ENCODE measurements at regions of chr18 and their contacts with region 1.

Region 1: GRCh38 chr18:9102508-9103375 is at the start of gene NDUFV2:
- DNase-seq: peak; percentile 95 to 96
- ATAC-seq: peak; percentile 89 to 93
- H3K4me3 ChIP-seq: peak within 1 kb of the TSS; percentile 73 to 89 (median 82)
- H3K27ac ChIP-seq: peak within 1 kb of the TSS; percentile 93 to 98 (median 96)
- H3K4me1 ChIP-seq: peaks cover 42 to 47% of the 10 kb centered on the region in 2 donors
- H3K27me3 ChIP-seq: no peaks in the 10 kb centered on the region
- CTCF ChIP-seq: no peak
- POLR2A ChIP-seq: peak; percentile 92
- total RNA-seq, gene NDUFV2: 251 to 386 (median 277) TPM

Region 2: DNA sequence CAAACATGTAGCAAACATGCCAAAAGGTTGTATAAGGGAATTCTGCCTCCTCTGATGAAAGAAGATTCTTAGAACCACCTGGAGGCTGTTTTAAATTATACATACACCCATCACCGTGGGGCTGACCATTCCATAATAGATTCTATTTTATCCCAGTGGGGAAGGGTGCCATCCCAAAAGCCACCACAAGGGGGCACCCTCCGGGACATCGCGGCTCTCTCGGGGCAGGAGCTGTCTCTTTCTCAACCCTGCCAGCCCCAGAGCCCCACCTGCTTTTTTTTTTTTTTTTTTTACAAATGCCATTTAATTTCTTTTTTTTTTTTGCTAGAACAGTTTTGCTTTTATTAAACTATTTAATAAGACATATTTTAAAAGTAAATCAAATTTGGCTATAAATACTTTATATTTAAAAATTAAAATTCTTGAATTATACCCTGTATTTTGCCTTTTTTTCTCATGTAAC is 406.0 kb before region 1 on chr18:
- in situ Hi-C with region 1: no loop called
- intact Hi-C with region 1: no loop called
- DNase-seq: peak; percentile 43 to 73
- ATAC-seq: peak; percentile 90 to 98
- H3K4me3 ChIP-seq: no peak overlapping the region
- H3K27ac ChIP-seq: no peak overlapping the region
- H3K4me1 ChIP-seq: no peaks in the 10 kb centered on the region
- H3K27me3 ChIP-seq: no peaks in the 10 kb centered on the region
- CTCF ChIP-seq: peak; percentile 66 to 94 (median 87)
- POLR2A ChIP-seq: no peak

Region 3: DNA sequence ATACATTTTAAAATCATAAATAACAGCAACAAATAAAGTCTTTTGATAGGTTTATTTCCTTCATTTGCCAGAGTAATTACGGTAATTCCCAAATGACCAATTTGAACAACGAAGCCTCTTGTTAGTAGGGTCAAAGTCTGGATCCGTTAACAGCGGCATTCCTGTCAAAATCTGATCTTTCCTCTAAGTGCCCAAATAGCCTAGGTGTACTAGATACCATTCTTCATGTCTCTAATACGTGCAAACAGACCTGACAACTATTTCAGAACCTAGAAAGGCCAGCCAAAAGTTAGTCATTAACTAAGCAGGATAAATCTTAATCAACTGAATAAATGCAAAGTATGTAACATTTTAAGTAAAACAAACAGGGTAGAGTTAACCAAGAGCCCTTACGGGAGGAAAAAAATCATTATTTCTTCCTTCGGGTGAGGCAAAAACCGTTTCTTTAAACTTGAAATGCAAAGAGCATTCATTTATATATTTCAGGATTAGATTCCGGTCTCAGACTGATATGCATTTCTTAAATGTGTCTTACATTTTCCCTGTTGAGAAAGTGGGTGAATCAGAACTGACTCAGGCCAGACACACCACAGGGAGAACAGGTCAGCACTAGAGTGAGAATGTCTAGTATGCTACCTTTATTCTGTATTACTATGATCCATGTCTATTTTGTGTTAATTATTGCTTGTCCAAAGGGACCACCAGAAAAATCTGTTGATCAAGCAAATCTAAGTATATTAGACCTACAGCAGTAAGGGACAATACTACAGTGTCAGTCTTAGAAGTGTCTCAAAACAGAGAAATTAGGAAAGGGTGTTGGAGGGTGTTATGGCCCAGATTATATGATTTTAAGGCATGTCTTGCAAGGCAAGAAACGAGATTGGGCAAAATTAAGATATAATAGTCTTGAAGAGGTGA is 141.7 kb before region 1 on chr18:
- in situ Hi-C with region 1: no loop called
- intact Hi-C with region 1: no loop called
- DNase-seq: no peak
- ATAC-seq: no peak
- H3K4me3 ChIP-seq: no peak overlapping the region
- H3K27ac ChIP-seq: no peak overlapping the region
- H3K4me1 ChIP-seq: no peaks in the 10 kb centered on the region
- H3K27me3 ChIP-seq: no peaks in the 10 kb centered on the region
- CTCF ChIP-seq: no peak
- POLR2A ChIP-seq: no peak

Region 4: DNA sequence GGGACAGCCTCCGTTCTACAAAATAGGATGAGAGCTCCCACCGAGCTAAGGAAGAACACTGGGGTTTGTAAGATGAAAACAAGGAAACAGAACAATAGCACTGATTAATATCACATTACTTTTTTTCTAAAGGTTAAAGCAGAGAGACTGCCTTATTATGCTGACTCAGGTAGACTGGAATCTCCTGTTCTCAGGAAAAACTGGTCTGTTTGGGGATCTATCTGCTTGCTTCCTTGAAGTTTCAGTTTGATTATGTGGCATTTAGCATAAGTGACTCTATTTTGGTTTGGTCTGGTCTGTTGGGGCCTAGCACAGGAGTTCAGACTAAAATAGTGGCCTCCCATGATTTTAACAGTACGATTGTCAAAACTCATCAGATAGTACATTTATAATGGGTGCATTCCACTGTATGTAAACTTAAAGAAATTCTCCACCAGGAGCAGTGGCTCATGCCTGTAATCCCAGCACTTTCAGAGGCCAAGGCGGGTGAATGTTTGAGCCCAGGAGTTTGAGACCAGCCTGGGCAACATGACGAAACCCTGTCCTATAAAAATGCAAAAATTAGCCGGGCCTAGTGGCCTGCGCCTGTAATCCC is 64.4 kb before region 1 on chr18:
- in situ Hi-C with region 1: no loop called
- intact Hi-C with region 1: no loop called
- DNase-seq: no peak
- ATAC-seq: no peak
- H3K4me3 ChIP-seq: no peak overlapping the region
- H3K27ac ChIP-seq: no peak overlapping the region
- H3K4me1 ChIP-seq: no peaks in the 10 kb centered on the region
- H3K27me3 ChIP-seq: no peaks in the 10 kb centered on the region
- CTCF ChIP-seq: no peak
- POLR2A ChIP-seq: no peak

Region 5: GRCh38 chr18:9066817-9067306 is 35.9 kb before region 1 on chr18:
- in situ Hi-C with region 1: no loop called
- intact Hi-C with region 1: loop called (anchors 2 kb)
- DNase-seq: no peak
- ATAC-seq: no peak
- H3K4me3 ChIP-seq: no peak overlapping the region
- H3K27ac ChIP-seq: no peak overlapping the region
- H3K4me1 ChIP-seq: peaks cover 0 to 7% of the 10 kb centered on the region in 2 donors
- H3K27me3 ChIP-seq: no peaks in the 10 kb centered on the region
- CTCF ChIP-seq: no peak
- POLR2A ChIP-seq: no peak

Region 6: DNA sequence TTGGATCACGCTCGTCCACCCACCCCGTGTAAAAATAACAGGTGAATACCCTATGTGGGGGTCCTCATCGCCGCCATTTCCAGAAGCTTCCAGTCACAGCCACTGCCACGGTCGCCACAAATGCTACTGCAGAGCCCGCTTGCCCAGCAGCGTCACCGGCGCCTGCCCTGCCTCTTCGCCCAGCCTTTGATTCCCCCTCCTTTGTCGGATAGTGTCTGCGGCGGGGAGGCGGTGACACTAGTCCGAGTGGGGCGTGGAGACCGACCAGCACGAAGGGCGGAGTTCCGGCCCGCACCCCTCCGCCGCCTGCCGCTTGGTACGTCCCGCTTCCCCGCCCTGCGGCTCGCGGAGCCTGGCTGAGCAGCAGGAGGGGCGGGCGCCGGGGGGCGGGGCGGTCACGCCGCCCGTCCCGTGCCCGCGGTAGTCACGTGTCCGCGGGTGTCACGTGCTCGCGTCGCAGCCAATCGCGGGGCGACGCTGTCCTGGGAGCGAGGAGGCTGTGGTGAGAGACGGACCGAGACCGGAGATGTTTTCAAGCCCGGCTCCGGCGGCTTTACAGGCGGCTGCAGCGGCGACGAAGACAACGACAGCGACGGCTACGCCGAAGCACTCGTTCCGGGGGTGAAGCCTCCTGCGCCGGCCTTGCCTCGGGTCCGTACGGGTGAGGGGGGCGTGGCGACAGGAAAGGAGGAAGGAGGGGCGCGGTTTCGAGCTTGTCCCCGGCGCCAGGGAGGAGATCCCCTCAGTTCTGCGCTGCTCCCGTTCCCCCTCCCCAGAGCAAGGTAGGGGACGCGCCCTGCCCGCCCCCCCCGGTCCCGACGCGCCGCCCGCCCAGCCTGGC is 33.8 kb after region 1 on chr18 and contains the start of gene ANKRD12:
- in situ Hi-C with region 1: loop called in 1 of 4 experiments (anchors 5 kb)
- intact Hi-C with region 1: loop called (anchors 1 kb)
- DNase-seq: peak; percentile 96 to 97
- ATAC-seq: peak; percentile 72 to 75
- H3K4me3 ChIP-seq: peak within 1 kb of the TSS; percentile 83 to 89 (median 86)
- H3K27ac ChIP-seq: peak within 1 kb of the TSS; percentile 97 to 98 (median 98)
- H3K4me1 ChIP-seq: peaks cover 58 to 64% of the 10 kb centered on the region in 2 donors
- H3K27me3 ChIP-seq: no peaks in the 10 kb centered on the region
- CTCF ChIP-seq: peak in 1 of 5 experiments; percentile 14
- POLR2A ChIP-seq: peak; percentile 93 to 94
- total RNA-seq, gene ANKRD12: 26.9 to 40.1 (median 36.7) TPM

Region 7: DNA sequence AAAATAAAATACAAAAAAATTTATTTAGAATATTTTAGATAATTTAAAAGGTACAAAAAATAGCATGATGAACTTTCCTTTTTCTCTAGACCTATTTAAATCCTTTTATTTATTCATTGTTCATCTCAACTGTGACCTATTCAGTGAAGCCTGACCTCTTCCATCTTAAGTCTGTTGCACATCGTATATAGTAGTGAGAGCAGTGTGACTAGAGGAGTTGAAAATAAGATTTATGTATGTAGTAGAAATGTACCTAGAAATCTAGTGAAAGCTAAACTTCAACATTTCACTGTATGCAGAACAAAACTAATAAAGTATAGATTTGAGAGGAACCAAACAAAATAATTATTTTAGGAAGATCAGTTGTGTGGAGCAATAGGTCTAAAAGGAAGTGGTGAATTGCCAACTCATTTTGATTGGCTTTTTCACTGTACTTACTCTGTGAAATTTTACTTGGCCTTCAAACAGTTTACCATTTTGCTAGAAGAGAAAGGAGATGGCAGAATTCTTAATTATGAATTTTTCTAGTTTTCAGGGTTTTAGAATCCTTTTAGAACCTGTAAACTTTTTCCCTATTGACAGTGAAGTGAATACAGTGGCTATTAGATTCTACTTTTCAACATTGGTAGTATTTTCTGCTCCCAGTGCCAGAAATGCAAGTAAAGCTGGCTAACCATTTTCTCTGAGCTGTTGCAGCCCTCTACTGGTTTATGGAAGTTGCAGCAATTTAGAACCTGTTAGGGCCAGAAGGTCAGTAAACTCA is 44.9 kb after region 1 on chr18:
- in situ Hi-C with region 1: no loop called
- intact Hi-C with region 1: loop called (anchors 1 kb)
- DNase-seq: peak; percentile 26 to 39
- ATAC-seq: peak; percentile 90 to 95
- H3K4me3 ChIP-seq: no peak overlapping the region
- H3K27ac ChIP-seq: peak overlapping the region; percentile 24 to 65 (median 58)
- H3K4me1 ChIP-seq: peaks cover 76 to 78% of the 10 kb centered on the region in 2 donors
- H3K27me3 ChIP-seq: no peaks in the 10 kb centered on the region
- CTCF ChIP-seq: peak; percentile 68 to 87 (median 81)
- POLR2A ChIP-seq: no peak

Region 8: GRCh38 chr18:9290156-9290555 is 187.4 kb after region 1 on chr18:
- in situ Hi-C with region 1: no loop called
- intact Hi-C with region 1: no loop called
- DNase-seq: no peak
- ATAC-seq: no peak
- H3K4me3 ChIP-seq: no peak overlapping the region
- H3K27ac ChIP-seq: no peak overlapping the region
- H3K4me1 ChIP-seq: no peaks in the 10 kb centered on the region
- H3K27me3 ChIP-seq: no peaks in the 10 kb centered on the region
- CTCF ChIP-seq: no peak
- POLR2A ChIP-seq: no peak